GM12878 (cell line): ENCODE measurements at regions of chr14 and their contacts with region 1.

Region 1: GRCh38 chr14:51219473-51220448 is 20.3 kb upstream of the TMX1 start:
- DNase-seq: no peak
- ATAC-seq: no peak
- H3K4me3 ChIP-seq: no peak overlapping the region
- H3K27ac ChIP-seq: no peak overlapping the region
- H3K4me1 ChIP-seq: no peaks in the 10 kb centered on the region
- H3K27me3 ChIP-seq: no peaks in the 10 kb centered on the region
- CTCF ChIP-seq: peak; percentile 47 to 64 (median 48)
- EP300 ChIP-seq: no peak
- POLR2A ChIP-seq: no peak
- RAD21 ChIP-seq: peak; percentile 73

Region 2: DNA sequence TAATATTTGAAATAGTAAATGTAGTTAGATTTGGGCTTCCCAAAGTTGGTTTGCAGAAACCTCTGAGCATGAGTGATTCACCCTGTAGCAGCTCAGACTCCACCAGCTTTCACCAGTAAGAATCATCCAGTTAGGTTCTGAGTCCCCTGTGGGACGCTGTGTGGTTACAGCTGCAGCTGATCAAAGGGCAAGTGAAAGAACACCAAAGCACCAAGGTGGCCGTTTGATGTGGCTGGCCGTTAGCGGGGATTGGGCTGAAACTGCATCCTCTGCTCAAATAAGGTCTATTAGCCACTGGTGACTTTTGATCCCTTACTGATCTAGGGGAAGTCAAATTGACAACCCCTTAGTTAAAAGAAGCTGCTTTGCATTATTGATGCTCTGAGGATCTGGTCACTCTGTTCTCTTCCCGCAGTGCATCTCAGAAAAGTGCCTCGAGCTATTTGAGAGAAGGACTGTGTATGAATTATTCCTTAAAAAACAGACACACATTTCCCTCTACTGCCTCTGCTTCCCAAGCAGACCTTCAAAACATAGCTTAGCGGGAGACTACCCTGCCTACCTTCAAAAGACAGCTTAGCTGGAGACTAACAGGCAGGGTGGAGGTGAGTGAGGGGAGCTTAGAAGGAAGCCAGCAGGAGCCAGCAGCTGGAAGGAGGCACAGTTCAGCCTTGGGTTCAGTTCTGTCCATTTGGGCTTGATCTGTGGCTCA is 344.2 kb before region 1 on chr14:
- CTCF ChIA-PET with region 1: no interaction called
- POLR2A ChIA-PET with region 1: no interaction called
- RAD21 ChIA-PET with region 1: no interaction called
- SMC1A ChIA-PET with region 1: no interaction called
- in situ Hi-C with region 1: no loop called
- intact Hi-C with region 1: loop called (anchors 10 kb)
- DNase-seq: peak; percentile 78
- ATAC-seq: peak; percentile 98
- H3K4me3 ChIP-seq: no peak overlapping the region; the same call in 1 of the 2 replicates
- H3K27ac ChIP-seq: no peak overlapping the region
- H3K4me1 ChIP-seq: peaks cover 11% of the 10 kb centered on the region
- H3K27me3 ChIP-seq: peaks cover 2 to 11% of the 10 kb centered on the region in 2 experiments; a peak in 3 of 4 replicates
- CTCF ChIP-seq: no peak
- EP300 ChIP-seq: peak; percentile 44 to 78; a peak in 2 of 4 replicates
- POLR2A ChIP-seq: no peak
- RAD21 ChIP-seq: no peak

Region 3: GRCh38 chr14:50954811-50955372 is 264.9 kb before region 1 on chr14:
- CTCF ChIA-PET with region 1: interaction called, 4 read pairs
- POLR2A ChIA-PET with region 1: no interaction called
- RAD21 ChIA-PET with region 1: no interaction called
- SMC1A ChIA-PET with region 1: interaction called, 9 read pairs
- in situ Hi-C with region 1: no loop called
- intact Hi-C with region 1: loop called (anchors 5 kb)
- DNase-seq: no peak
- ATAC-seq: peak; percentile 78
- H3K4me3 ChIP-seq: no peak overlapping the region
- H3K27ac ChIP-seq: no peak overlapping the region
- H3K4me1 ChIP-seq: no peaks in the 10 kb centered on the region
- H3K27me3 ChIP-seq: no peaks in the 10 kb centered on the region
- CTCF ChIP-seq: peak; percentile 49 to 56 (median 53); a peak in 5 of 6 replicates
- EP300 ChIP-seq: no peak
- POLR2A ChIP-seq: no peak
- RAD21 ChIP-seq: peak; percentile 61

Region 4: DNA sequence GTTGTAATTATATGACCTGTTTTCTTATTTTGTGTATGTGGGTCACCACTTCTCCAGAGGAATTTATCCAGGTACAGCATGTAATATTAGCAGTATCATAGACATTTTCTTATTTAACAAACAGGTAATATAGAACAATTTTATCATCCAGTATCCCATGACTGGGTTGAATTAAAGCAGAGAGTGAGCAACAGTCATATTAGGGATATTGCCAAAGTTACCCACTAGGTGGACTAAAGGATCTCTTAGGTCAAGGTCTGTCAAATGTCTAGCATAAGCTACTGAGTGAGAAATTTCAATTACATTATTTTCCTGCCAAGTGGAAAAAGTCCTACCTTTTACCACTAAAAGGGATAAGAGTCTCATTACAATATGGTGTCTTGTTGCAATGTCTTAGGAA is 62.7 kb before region 1 on chr14:
- CTCF ChIA-PET with region 1: interaction called, 27 read pairs
- POLR2A ChIA-PET with region 1: no interaction called
- RAD21 ChIA-PET with region 1: interaction called, 14 read pairs
- SMC1A ChIA-PET with region 1: interaction called, 17 read pairs
- in situ Hi-C with region 1: no loop called
- intact Hi-C with region 1: loop called (anchors 1 kb)
- DNase-seq: no peak
- ATAC-seq: peak; percentile 92
- H3K4me3 ChIP-seq: no peak overlapping the region
- H3K27ac ChIP-seq: no peak overlapping the region
- H3K4me1 ChIP-seq: peaks cover 7% of the 10 kb centered on the region
- H3K27me3 ChIP-seq: no peaks in the 10 kb centered on the region
- CTCF ChIP-seq: peak; percentile 57 to 64 (median 63)
- EP300 ChIP-seq: no peak
- POLR2A ChIP-seq: no peak
- RAD21 ChIP-seq: peak; percentile 74

Region 5: GRCh38 chr14:51202914-51203665 is 16.7 kb before region 1 on chr14:
- CTCF ChIA-PET with region 1: interaction called, 17 read pairs
- POLR2A ChIA-PET with region 1: no interaction called
- RAD21 ChIA-PET with region 1: interaction called, 8 read pairs
- SMC1A ChIA-PET with region 1: interaction called, 16 read pairs
- in situ Hi-C with region 1: no loop called
- intact Hi-C with region 1: no loop called
- DNase-seq: peak; percentile 81
- ATAC-seq: peak; percentile 86
- H3K4me3 ChIP-seq: no peak overlapping the region
- H3K27ac ChIP-seq: peak overlapping the region; percentile 7; the same call in 1 of the 2 replicates
- H3K4me1 ChIP-seq: peaks cover 20% of the 10 kb centered on the region
- H3K27me3 ChIP-seq: no peaks in the 10 kb centered on the region; a peak in 1 of 4 replicates
- CTCF ChIP-seq: peak; percentile 27 to 38 (median 35); a peak in 4 of 6 replicates
- EP300 ChIP-seq: no peak
- POLR2A ChIP-seq: no peak
- RAD21 ChIP-seq: peak; percentile 30; the same call in 1 of the 2 replicates

Region 6: DNA sequence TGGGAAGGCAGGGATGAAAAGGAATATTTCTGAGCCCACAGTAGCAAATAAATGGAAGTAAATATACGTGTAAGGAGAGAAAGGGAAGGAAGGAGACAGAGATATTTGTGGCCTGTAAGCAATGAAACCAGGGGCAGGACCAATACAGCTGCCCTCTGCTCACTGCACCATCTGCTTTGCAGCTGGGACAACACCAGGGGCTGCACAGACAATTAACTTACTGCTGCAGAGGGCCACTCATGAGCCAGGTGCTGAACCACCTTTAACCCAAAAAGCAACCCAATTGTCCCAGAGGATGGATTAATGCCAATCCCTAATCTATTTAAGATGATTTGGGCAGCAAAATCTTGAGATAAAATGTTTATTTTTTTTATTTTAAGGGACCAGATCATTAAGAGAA is 10.3 kb before region 1 on chr14:
- CTCF ChIA-PET with region 1: interaction called, 17 read pairs
- POLR2A ChIA-PET with region 1: no interaction called
- RAD21 ChIA-PET with region 1: interaction called, 3 read pairs
- SMC1A ChIA-PET with region 1: interaction called, 16 read pairs
- in situ Hi-C with region 1: no loop called
- intact Hi-C with region 1: no loop called
- DNase-seq: no peak
- ATAC-seq: peak; percentile 81
- H3K4me3 ChIP-seq: no peak overlapping the region
- H3K27ac ChIP-seq: no peak overlapping the region
- H3K4me1 ChIP-seq: 0 out of 2 replicates have a peak, but pooled peaks cover 2% of the 10 kb centered on the region
- H3K27me3 ChIP-seq: no peaks in the 10 kb centered on the region; a peak in 1 of 4 replicates
- CTCF ChIP-seq: no peak
- EP300 ChIP-seq: no peak
- POLR2A ChIP-seq: no peak
- RAD21 ChIP-seq: no peak